Calu3 (cell line): ENCODE measurements at regions of chr5 and their contacts with region 1.

Region 1: GRCh38 chr5:671459-672328 is 21.5 kb downstream of the TPPP start:
- DNase-seq: peak; percentile 80
- H3K4me3 Mint-ChIP-seq: peak overlapping the region; percentile 64
- H3K27ac Mint-ChIP-seq: peak overlapping the region; percentile 92
- H3K4me1 Mint-ChIP-seq: peaks cover 10% of the 10 kb centered on the region
- H3K27me3 Mint-ChIP-seq: peaks cover 11% of the 10 kb centered on the region
- CTCF ChIP-seq: peak; percentile 84

Region 2: DNA sequence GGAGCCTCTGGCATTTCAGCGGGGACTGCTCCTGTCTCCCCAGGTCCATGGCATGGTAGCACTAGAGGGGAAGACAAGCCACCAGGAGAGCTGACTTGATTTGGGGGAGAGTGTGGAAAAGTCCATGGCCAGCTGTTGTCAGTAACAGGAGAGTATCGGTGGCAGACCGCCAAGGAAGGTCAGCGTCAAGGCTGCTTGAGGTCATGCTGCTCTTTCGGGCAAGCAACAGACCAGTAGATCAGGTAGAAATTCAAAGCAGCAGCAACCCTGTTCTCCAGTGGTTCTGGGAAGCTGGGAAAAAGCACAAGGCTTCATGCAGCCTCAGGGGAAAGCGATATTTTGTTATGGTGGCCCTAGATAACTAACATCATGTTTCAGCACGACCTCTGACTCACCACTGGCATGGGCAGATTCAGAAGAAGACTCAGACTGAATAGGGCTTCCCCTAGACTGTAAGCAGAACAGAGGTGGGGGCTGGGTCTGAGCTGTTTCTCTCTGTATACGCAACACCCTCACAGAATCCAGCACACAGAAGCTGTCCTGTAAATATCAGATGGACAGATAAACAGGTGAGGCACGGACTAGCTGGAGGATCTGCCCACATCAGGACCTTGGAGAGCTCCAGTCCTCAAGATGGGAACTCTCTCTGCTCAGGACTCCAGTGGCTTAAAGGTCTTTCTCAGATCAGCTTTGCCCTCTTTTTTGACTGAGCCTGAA is 615.0 kb before region 1 on chr5:
- CTCF ChIA-PET with region 1: no interaction called
- intact Hi-C with region 1: no loop called
- DNase-seq: no peak
- H3K4me3 Mint-ChIP-seq: no peak overlapping the region
- H3K27ac Mint-ChIP-seq: no peak overlapping the region
- H3K4me1 Mint-ChIP-seq: no peaks in the 10 kb centered on the region
- H3K27me3 Mint-ChIP-seq: peaks cover 42% of the 10 kb centered on the region
- CTCF ChIP-seq: no peak

Region 3: GRCh38 chr5:603061-603998 is 68.4 kb before region 1 on chr5:
- CTCF ChIA-PET with region 1: interaction called, 10 read pairs
- intact Hi-C with region 1: no loop called
- DNase-seq: no peak
- H3K4me3 Mint-ChIP-seq: no peak overlapping the region
- H3K27ac Mint-ChIP-seq: peak overlapping the region; percentile 54
- H3K4me1 Mint-ChIP-seq: peaks cover 8% of the 10 kb centered on the region
- H3K27me3 Mint-ChIP-seq: peaks cover 70% of the 10 kb centered on the region
- CTCF ChIP-seq: no peak

Region 4: GRCh38 chr5:902129-902916 is 230.6 kb after region 1 on chr5:
- CTCF ChIA-PET with region 1: no interaction called
- intact Hi-C with region 1: loop called (anchors 5 kb)
- DNase-seq: no peak
- H3K4me3 Mint-ChIP-seq: no peak overlapping the region
- H3K27ac Mint-ChIP-seq: no peak overlapping the region
- H3K4me1 Mint-ChIP-seq: peaks cover 6% of the 10 kb centered on the region
- H3K27me3 Mint-ChIP-seq: no peaks in the 10 kb centered on the region
- CTCF ChIP-seq: no peak